ENCODE measurements at regions of chr2 and their contacts with region 1.

Region 1: GRCh38 chr2:45494269-45494977 is 116.6 kb downstream of the SRBD1 start:
- DNase-seq: no peak
- ATAC-seq: peak; percentile 39 to 52
- H3K4me3 ChIP-seq: no peak overlapping the region
- H3K27ac ChIP-seq: no peak overlapping the region
- H3K4me1 ChIP-seq: no peaks in the 10 kb centered on the region
- H3K27me3 ChIP-seq: no peaks in the 10 kb centered on the region
- CTCF ChIP-seq: peak; percentile 76

Region 2: DNA sequence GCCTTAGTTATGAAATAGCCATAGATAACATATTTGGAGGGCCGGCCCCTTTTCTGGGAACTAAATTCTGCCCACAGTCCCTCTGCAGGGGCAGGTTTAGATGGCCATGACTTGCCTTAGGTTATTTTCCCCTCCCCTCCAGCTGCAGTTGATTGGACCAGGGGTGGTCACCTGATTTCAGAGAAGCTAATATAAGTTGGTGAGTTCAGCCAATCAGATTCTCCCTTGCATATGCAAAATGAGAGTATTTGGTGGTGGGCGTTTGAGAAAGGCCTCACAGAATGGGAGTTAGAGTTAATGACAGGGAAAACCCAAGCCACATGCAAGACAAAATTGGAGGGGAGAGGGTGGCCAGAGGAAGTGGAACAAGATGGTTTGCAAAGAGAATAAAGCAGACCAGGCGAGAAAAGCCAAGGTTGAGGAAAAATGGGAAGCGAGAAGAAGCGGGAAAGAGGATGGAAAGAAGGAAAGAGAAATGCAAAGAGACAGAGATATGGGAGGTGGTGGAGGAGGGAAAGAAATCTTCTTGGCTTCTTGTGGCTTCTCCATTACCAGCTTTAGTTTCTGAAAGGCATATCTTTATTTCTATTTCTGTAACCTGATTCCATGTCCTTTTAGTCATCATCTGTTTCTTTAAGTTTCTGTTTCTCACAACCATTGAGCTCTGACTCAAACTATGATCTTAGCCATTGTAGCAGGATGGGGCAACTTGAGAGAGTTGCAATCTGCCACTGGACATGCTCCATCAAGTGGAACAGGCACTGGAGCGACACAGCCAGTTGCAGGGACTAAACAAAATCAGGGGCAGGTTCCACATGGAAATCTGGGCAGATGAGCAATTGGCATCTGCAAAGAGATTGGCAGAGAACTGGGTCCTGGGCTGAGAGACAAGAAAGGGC is 661.0 kb before region 1 on chr2:
- intact Hi-C with region 1: no loop called
- DNase-seq: no peak
- ATAC-seq: no peak
- H3K4me3 ChIP-seq: no peak overlapping the region
- H3K27ac ChIP-seq: no peak overlapping the region
- H3K4me1 ChIP-seq: no peaks in the 10 kb centered on the region
- H3K27me3 ChIP-seq: no peaks in the 10 kb centered on the region
- CTCF ChIP-seq: no peak

Region 3: DNA sequence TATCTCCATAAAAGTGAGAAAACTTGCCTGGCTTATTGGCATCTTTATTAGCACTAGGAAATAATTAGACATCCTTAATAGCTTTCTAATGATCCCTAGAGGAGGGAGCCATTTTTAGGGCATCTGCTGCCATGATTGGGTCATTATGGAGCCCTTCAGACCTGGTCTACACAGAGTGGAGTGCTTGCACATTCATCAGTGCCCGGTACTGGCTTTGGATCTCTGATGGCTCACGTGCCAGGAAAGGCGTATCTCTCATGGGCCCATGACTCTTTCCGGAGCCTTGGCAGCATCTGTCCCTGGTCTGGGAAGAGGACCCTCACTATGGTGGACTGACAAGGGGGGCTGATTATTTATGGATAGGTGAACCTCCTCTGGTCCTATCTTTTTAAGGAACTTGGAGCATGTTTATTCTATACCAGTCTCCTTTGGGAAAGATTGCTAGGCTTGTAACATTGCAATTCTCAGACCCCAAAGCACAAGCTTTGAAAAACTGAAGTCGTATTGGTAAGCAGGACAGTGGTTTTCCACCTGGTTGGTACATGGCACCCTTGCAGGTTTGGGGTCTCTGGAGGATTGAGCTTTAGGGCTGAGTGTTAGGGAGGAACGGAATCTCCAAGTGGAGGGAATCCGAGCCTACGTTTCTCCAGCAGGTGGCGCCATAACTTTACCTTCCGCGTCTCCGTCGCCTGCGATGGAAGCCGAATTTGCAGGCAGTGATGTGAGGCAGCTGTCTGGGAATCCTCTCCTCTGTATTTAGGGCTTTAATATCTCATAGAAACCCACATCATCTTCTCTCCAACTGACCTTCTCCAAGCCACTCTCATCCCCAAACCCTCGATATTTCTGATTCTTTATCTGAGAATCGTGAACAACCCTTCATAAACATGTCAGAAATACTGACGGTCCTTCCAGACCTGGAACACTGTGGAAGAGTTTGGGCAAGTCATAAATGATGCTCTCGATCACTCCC is 513.0 kb before region 1 on chr2:
- intact Hi-C with region 1: loop called (anchors 10 kb)
- DNase-seq: peak; percentile 79
- ATAC-seq: peak; percentile 68 to 80
- H3K4me3 ChIP-seq: no peak overlapping the region
- H3K27ac ChIP-seq: no peak overlapping the region
- H3K4me1 ChIP-seq: no peaks in the 10 kb centered on the region
- H3K27me3 ChIP-seq: peaks cover 11% of the 10 kb centered on the region
- CTCF ChIP-seq: peak; percentile 89

Measured in lower lobe of right lung (tissue), 2 donors.